Activated CD4-positive, alpha-beta memory T cell treated with anti-CD3 and anti-CD28 coated beads for 36 hours (primary cell): ENCODE measurements at regions of chr2 and their contacts with region 1.

Region 1: DNA sequence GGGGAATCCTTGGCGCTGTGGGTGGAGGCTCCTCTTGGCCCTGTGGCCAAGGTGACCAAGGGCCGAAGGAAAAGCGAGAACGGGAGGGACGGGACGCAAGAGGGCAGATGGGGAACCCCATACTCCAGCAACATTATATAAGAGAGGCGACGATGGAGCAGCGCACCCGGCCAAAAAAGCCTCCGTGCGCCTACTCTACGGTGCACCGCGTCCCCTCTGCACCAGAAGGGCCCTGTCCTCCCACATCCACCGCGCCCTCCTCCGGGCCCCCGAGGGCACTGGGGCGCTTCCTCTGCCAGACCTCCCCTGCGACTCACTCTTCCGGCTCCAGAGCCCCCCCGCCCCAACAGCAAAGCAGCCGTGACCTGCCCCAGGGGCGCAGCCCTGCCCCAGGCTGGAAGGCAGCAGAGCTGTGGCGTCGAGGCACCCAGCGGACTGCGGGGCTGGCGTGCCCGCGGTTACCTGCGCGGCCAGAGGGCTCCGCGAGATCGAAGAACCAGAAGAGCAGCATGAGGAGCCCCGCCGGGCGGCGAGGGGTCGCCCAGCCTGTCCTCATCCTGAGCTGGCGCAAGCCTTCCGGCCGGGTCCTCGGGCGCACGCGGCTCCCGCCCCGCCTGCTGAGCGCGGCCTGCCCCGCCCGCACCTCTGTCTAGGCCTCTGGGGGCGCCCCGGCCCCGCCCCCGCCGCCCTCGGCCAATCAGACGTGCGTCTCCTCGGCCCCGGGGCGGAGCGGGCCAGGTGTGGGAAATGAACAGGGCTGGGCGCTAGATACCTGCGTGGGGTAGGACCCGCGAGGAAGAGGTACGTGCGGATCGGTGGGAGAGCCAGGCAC is 106.3 kb upstream of the CD302 start:
- DNase-seq: peak; percentile 88
- H3K4me3 Mint-ChIP-seq: peak within 1 kb of the TSS; percentile 91
- H3K27ac Mint-ChIP-seq: peak within 1 kb of the TSS; percentile 92
- H3K4me1 Mint-ChIP-seq: peaks cover 68% of the 10 kb centered on the region
- H3K27me3 Mint-ChIP-seq: no peaks in the 10 kb centered on the region

Region 2: GRCh38 chr2:159286709-159287441 is 617.5 kb before region 1 on chr2:
- CTCF ChIA-PET with region 1: no interaction called
- POLR2A ChIA-PET with region 1: no interaction called
- intact Hi-C with region 1: loop called (anchors 10 kb)
- DNase-seq: peak; percentile 97
- H3K4me3 Mint-ChIP-seq: peak overlapping the region; percentile 87
- H3K27ac Mint-ChIP-seq: peak overlapping the region; percentile 63
- H3K4me1 Mint-ChIP-seq: peaks cover 20% of the 10 kb centered on the region
- H3K27me3 Mint-ChIP-seq: no peaks in the 10 kb centered on the region

Region 3: GRCh38 chr2:159712143-159712928 is 192.0 kb before region 1 on chr2 and contains the start of gene MARCHF7:
- CTCF ChIA-PET with region 1: no interaction called
- POLR2A ChIA-PET with region 1: interaction called, 5 read pairs
- intact Hi-C with region 1: loop called (anchors 2 kb)
- DNase-seq: peak; percentile 98
- H3K4me3 Mint-ChIP-seq: peak within 1 kb of the TSS; percentile 100
- H3K27ac Mint-ChIP-seq: peak within 1 kb of the TSS; percentile 100
- H3K4me1 Mint-ChIP-seq: peaks cover 47% of the 10 kb centered on the region
- H3K27me3 Mint-ChIP-seq: no peaks in the 10 kb centered on the region
- total RNA-seq, gene MARCHF7: 84.0 to 86.7 TPM

Region 4: DNA sequence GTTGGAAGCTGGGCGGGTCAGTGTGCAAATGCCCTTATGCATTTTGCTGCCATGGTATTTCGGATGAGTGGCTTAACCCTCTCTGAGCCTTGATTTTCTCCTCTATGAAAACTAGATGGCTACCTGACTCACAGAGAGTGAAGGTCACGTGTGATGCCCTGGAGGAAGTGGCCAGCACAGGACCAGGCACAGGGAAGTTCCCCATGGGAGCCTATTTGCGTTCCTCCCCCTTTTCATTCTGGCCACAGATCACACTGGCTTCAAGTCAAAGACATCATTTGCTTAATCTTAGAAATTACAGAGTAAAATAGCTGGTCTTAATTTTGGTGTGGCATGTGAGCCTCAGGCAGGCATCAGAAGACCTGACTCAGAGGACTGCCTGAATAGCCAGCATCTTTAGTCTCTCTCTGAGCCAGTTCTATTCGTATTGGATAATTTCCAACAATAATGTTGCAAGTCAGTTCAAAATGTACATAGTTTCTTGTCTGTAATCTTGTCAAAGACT is 48.7 kb before region 1 on chr2:
- CTCF ChIA-PET with region 1: no interaction called
- POLR2A ChIA-PET with region 1: no interaction called
- intact Hi-C with region 1: no loop called
- DNase-seq: no peak
- H3K4me3 Mint-ChIP-seq: no peak overlapping the region
- H3K27ac Mint-ChIP-seq: no peak overlapping the region
- H3K4me1 Mint-ChIP-seq: peaks cover 8% of the 10 kb centered on the region
- H3K27me3 Mint-ChIP-seq: no peaks in the 10 kb centered on the region

Region 5: DNA sequence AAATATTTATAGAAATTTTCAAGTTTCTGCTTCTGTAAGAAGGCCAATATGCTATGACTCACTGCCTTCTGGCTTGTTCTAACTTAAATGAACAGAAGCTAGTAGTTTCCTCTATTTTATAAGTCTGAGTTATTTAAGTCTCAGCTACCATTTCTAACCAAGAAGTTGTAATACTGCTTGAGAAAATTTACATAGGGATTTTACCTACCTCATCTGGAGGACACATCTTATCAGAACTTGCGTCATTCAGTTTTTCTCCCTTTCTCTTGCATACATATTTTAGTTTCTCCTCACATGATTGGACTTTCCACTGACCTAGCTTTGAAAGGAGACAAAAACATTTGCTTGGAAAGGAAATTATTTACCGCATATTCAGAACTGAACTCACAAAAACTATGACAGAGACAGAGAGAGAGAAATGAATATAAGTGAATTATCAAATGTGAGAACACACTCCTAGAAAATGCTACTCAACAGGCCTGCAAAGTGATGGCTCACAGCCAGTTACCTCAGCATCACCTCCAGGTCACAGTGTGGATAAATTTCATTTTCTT is 25.2 kb before region 1 on chr2:
- CTCF ChIA-PET with region 1: interaction called, 6 read pairs
- POLR2A ChIA-PET with region 1: interaction called, 9 read pairs
- intact Hi-C with region 1: loop called (anchors 1 kb)
- DNase-seq: peak; percentile 72
- H3K4me3 Mint-ChIP-seq: no peak overlapping the region
- H3K27ac Mint-ChIP-seq: peak overlapping the region; percentile 88
- H3K4me1 Mint-ChIP-seq: peaks cover 61% of the 10 kb centered on the region
- H3K27me3 Mint-ChIP-seq: no peaks in the 10 kb centered on the region

Region 6: GRCh38 chr2:159960383-159960782 is 56.0 kb after region 1 on chr2:
- CTCF ChIA-PET with region 1: no interaction called
- POLR2A ChIA-PET with region 1: no interaction called
- intact Hi-C with region 1: loop called (anchors 2 kb)
- DNase-seq: no peak
- H3K4me3 Mint-ChIP-seq: no peak overlapping the region
- H3K27ac Mint-ChIP-seq: no peak overlapping the region
- H3K4me1 Mint-ChIP-seq: peaks cover 16% of the 10 kb centered on the region
- H3K27me3 Mint-ChIP-seq: peaks cover 5% of the 10 kb centered on the region

Region 7: GRCh38 chr2:160269803-160270570 is 365.6 kb after region 1 on chr2:
- CTCF ChIA-PET with region 1: interaction called, 3 read pairs
- POLR2A ChIA-PET with region 1: no interaction called
- intact Hi-C with region 1: loop called (anchors 5 kb)
- DNase-seq: peak; percentile 81
- H3K4me3 Mint-ChIP-seq: peak overlapping the region; percentile 63
- H3K27ac Mint-ChIP-seq: peak overlapping the region; percentile 28
- H3K4me1 Mint-ChIP-seq: peaks cover 45% of the 10 kb centered on the region
- H3K27me3 Mint-ChIP-seq: peaks cover 5% of the 10 kb centered on the region

Region 8: GRCh38 chr2:160406591-160407392 is 502.4 kb after region 1 on chr2:
- CTCF ChIA-PET with region 1: no interaction called
- POLR2A ChIA-PET with region 1: no interaction called
- intact Hi-C with region 1: loop called (anchors 10 kb)
- DNase-seq: peak; percentile 78
- H3K4me3 Mint-ChIP-seq: peak overlapping the region; percentile 82
- H3K27ac Mint-ChIP-seq: peak overlapping the region; percentile 94
- H3K4me1 Mint-ChIP-seq: peaks cover 80% of the 10 kb centered on the region
- H3K27me3 Mint-ChIP-seq: no peaks in the 10 kb centered on the region